Posterior cingulate gyrus (tissue), 11 donors: ENCODE measurements at regions of chr4 and their contacts with region 1.

Region 1: DNA sequence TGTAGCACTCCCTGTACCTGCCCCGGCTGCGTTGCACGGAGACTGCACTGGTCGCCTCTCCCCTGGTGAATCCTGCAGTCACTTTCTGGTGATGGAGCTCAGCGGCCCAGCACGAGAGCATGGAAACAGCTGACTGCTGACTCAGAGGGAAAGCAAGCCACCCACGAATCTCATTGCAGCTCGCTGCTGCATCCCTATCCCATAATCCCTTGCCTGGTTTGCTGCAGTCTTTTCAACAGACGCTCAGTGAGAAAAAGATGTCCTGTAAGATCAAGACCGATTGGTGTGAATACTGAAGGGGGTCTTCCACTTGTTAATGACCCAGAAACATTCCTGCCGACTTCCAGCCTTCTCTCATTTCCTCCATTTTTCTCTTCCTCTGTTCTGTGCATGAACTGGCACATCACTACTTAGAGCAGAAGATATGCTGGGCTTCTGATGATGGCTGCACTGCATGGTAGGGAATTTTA is 52.9 kb downstream of the TRIM2 start:
- DNase-seq: peak; percentile 64 to 96 (median 82)

Region 2: DNA sequence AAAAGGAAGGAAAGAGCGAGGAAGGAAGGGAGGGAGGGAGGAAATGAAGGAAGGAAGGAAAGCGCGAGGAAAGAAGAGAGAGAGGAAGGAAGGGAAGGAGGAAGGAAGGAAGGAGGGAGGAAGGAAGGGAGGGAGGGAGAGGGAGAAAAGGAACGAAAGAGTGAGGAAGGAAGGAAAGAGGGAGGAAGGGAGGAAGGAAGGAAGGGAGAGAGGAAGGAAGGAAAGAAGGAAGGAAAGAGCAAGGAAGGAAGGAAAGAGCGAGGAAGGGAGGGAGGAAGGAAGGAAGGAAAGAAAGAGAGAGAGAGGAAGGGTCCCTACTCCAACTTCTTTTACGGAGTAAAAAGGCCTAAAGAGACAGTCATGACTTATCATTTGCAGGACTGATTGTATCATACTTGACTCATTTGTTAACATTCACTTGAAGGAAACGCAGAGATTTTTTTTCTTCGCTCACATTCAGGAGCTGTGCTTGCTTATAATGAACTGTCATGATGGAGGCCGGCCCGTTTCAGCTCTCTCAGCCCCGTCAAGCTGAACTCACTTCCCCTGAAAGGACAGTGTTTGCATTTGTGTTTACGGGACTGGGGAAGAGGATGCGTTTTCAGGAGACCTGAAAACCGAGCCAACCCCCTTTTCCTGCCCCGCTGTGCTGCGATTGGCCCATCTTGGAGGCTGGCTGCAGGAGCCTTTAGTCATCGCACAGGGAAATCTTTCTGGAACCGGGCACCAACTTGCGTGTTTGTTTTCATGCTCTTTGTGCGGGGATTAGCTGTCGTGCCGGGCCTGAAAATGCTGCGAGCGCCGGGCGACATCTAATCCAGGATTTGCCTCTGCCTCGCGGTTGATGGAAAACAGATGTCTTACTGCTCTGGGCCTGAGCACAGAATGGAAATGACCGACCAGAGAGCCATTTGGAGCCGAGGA is 35.1 kb before region 1 on chr4:
- intact Hi-C with region 1: loop called (anchors 5 kb)
- DNase-seq: peak; percentile 46 to 94 (median 64)